ENCODE measurements at regions of chr2 and their contacts with region 1.

Region 1: DNA sequence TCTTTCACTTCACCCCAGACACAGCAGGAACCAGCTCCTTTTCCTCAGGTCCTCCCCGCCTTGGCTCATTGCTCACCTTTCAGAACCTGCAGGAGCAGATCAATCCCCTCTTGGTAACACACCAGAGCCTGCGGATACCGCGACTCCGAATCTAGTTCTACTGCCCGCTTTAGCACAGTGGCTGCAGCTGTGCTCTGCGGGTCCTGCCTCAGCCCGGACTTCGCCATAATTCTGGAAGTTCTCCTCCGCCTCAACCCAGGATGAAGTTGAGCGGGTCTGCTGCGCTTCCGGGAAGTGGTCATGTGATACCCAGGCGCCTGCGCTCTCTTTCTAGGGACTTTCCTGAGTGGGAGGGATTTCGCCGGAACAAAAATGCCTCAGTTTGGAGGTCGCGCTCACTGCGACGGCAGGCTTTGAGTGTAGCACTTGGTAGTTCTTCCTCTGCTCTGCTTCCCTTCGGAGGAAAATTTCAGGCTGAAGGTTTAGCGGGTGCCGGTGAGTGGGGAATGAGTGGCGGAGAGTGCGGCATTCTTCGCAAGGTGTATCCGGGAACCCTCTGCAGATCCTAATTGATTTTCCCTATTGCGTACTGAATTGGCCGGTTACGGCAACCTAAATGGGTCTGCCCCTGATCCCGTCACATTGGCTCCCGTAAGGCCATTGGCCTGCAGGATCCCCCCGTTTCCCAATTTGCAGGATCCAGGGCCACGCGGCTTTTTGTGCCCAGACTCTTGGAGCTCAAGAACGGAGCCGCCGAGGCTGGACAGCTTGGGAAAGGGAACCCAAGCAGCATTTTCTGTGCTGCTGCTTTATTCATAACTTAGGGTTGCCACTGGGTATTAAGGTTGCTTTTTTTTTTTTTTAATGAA is at the starts of genes MITD1 and MRPL30:
- DNase-seq: peak; percentile 91 to 93 (median 92)
- H3K4me3 ChIP-seq: peak within 1 kb of the TSS; percentile 70 to 71
- H3K4me3 Mint-ChIP-seq: peak within 1 kb of the TSS; percentile 98 to 100 (median 99)
- H3K27ac ChIP-seq: peak within 1 kb of the TSS; percentile 91
- H3K27ac Mint-ChIP-seq: peak within 1 kb of the TSS; percentile 93 to 100 (median 99)
- H3K4me1 ChIP-seq: peaks cover 57% of the 10 kb centered on the region
- H3K4me1 Mint-ChIP-seq: peaks cover 41 to 79% (median 60%) of the 10 kb centered on the region in 4 donors
- H3K27me3 ChIP-seq: no peaks in the 10 kb centered on the region
- H3K27me3 Mint-ChIP-seq: no peaks in the 10 kb centered on the region
- total RNA-seq, gene MITD1: 79.1 to 84.3 TPM
- total RNA-seq, gene MRPL30: 20.2 to 22.7 TPM

Region 2: GRCh38 chr2:99032786-99033185 is 148.2 kb before region 1 on chr2:
- CTCF ChIA-PET with region 1: no interaction called
- POLR2A ChIA-PET with region 1: no interaction called
- intact Hi-C with region 1: no loop called
- DNase-seq: no peak
- H3K4me3 ChIP-seq: no peak overlapping the region
- H3K4me3 Mint-ChIP-seq: no peak overlapping the region
- H3K27ac ChIP-seq: no peak overlapping the region
- H3K27ac Mint-ChIP-seq: no peak overlapping the region
- H3K4me1 ChIP-seq: no peaks in the 10 kb centered on the region
- H3K4me1 Mint-ChIP-seq: no peaks in the 10 kb centered on the region
- H3K27me3 ChIP-seq: no peaks in the 10 kb centered on the region
- H3K27me3 Mint-ChIP-seq: peaks cover 4% of the 10 kb centered on the region in 2 donors

Region 3: DNA sequence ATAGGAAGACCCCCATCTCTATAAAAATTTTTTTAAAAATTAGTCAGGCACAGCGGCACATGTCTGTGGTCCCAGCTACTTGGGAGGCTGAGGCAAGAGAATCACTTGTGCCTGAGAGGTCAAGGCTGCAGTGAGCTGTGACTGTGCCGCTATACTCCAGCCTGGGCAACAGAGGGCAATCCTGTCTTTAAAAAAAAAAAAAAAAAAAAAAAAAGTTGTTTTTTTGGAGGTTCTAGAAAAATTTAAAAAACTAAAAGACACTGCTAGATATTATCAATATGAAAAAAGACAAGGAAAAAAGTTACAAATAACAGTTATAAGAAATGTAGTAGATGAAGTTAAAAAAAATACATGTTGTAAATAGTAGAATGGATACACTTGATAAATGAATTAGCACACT is 95.6 kb before region 1 on chr2:
- CTCF ChIA-PET with region 1: interaction called, 3 read pairs
- POLR2A ChIA-PET with region 1: interaction called, 3 read pairs
- intact Hi-C with region 1: loop called (anchors 5 kb)
- DNase-seq: peak in 3 of 5 donors; percentile 8 to 18 (median 14)
- H3K4me3 ChIP-seq: no peak overlapping the region
- H3K4me3 Mint-ChIP-seq: no peak overlapping the region
- H3K27ac ChIP-seq: no peak overlapping the region
- H3K27ac Mint-ChIP-seq: peak overlapping the region in 1 of 7 donors; percentile 39
- H3K4me1 ChIP-seq: peaks cover 8% of the 10 kb centered on the region
- H3K4me1 Mint-ChIP-seq: peaks cover 4 to 5% (median 5%) of the 10 kb centered on the region in 4 donors
- H3K27me3 ChIP-seq: no peaks in the 10 kb centered on the region
- H3K27me3 Mint-ChIP-seq: peaks cover 14 to 18% of the 10 kb centered on the region in 2 donors

Region 4: DNA sequence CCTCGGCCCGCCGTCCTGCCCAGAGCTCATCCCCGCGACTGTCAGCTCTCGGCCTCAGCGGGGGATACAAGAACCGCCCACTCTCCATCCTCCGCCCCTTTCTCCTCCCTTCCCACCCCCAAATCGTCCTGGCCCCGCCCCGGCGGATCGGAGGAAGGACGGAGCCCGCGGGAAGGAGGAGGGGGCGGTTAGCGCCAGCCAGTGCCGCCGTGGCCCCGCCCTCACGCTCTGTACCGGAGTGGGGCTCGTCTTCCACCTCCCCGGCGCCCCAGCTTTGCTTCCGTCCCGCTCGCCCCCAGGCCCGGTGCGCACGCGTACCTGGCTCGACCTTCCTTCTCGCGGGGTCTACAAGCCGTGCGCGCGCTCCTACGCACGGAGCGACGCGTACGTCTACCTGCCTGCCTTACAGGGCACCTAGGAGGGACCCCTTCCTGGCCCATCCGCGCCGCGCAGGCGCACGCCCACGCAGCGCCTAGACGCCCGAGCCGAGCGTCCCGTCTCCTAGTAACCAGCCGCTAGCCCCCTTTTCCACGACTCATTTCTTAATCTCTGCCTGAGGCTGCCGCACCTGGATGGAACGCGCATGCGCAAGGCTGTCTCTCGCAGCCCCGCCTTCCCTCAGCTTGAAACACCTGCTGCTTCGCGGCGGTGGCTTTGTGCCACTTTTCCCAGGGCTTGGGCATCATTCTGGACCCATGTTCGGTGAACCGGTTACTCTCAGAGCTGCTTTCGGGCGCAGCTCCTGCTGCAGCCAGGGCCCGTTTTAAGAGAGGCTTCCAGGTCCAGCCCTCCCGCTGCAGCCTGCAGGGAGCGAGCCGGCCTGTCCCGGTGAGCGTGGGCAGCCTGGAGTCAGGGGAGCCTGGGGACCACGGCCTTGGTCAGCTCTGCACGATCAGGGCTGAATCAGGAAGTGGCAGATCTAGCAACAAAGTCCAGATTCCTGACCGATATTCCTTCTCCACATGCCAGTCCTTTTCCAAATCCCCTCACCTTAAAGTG is 39.6 kb before region 1 on chr2 and contains the start of gene C2orf15:
- CTCF ChIA-PET with region 1: interaction called, 8 read pairs
- POLR2A ChIA-PET with region 1: interaction called, 34 read pairs
- intact Hi-C with region 1: loop called (anchors 1 kb)
- DNase-seq: peak; percentile 97 to 98 (median 97)
- H3K4me3 ChIP-seq: peak within 1 kb of the TSS; percentile 50 to 97
- H3K4me3 Mint-ChIP-seq: peak within 1 kb of the TSS; percentile 93 to 99 (median 96)
- H3K27ac ChIP-seq: peak within 1 kb of the TSS; percentile 86
- H3K27ac Mint-ChIP-seq: peak within 1 kb of the TSS; percentile 96 to 99 (median 98)
- H3K4me1 ChIP-seq: peaks cover 18% of the 10 kb centered on the region
- H3K4me1 Mint-ChIP-seq: peaks cover 11 to 31% (median 17%) of the 10 kb centered on the region in 4 donors
- H3K27me3 ChIP-seq: no peaks in the 10 kb centered on the region
- H3K27me3 Mint-ChIP-seq: no peaks in the 10 kb centered on the region
- total RNA-seq, gene C2orf15: 2.3 to 3.2 TPM

Region 5: DNA sequence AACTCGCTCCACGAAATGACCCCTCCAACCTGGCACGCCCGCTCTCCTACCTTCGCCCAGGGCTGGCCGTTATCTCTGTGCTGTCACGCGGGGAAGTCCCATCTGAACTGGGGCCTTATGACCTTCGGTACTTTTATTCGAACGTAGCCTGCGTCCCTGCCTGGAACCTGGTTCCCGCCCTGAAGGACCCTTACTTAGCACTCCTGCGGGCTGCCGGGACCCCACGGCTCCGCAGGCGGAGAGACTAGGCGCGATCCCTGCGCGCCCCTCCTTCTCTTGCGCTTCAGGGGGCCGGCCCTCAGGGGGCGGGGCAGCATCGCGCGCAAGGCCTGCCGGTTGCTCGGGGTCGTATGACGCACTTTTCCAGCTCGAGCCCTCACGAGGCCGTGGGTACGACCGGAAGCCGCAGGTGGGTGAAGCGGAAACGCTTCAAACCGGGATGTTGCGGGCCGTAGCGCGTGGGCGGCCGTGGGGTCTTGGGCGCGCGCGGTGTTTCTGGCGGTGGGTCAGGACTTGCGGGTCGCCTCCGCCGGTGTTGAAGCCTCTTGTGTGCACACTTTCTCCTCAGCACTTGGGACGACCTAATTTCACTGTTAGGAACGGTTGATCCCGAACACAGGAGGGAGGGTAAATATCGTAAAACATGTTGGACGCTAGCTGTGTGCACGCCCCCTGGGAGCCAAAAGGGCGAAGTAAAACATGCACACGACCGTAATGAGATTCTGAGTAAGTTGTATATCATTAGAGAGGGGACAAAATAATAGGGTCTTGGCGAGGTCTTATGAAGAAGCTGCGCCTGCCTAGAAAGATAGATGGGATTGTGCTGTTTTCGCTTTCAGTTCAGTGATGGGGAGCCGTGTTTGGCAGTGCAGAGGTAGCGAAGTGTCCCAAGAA is 26.1 kb before region 1 on chr2 and contains the starts of genes LIPT1 and TSGA10:
- CTCF ChIA-PET with region 1: interaction called, 10 read pairs
- POLR2A ChIA-PET with region 1: interaction called, 40 read pairs
- intact Hi-C with region 1: loop called (anchors 1 kb)
- DNase-seq: peak; percentile 90 to 92 (median 91)
- H3K4me3 ChIP-seq: peak within 1 kb of the TSS; percentile 78 to 89
- H3K4me3 Mint-ChIP-seq: peak within 1 kb of the TSS in 3 of 8 donors; percentile 91 to 99 (median 96)
- H3K27ac ChIP-seq: peak within 1 kb of the TSS; percentile 97
- H3K27ac Mint-ChIP-seq: peak within 1 kb of the TSS in 1 of 7 donors; percentile 100
- H3K4me1 ChIP-seq: peaks cover 25% of the 10 kb centered on the region
- H3K4me1 Mint-ChIP-seq: peaks cover 10 to 43% (median 39%) of the 10 kb centered on the region in 4 donors
- H3K27me3 ChIP-seq: no peaks in the 10 kb centered on the region
- H3K27me3 Mint-ChIP-seq: no peaks in the 10 kb centered on the region
- total RNA-seq, gene LIPT1: 23.4 to 24.4 TPM
- total RNA-seq, gene TSGA10: 20.7 to 22.6 TPM

Region 6: DNA sequence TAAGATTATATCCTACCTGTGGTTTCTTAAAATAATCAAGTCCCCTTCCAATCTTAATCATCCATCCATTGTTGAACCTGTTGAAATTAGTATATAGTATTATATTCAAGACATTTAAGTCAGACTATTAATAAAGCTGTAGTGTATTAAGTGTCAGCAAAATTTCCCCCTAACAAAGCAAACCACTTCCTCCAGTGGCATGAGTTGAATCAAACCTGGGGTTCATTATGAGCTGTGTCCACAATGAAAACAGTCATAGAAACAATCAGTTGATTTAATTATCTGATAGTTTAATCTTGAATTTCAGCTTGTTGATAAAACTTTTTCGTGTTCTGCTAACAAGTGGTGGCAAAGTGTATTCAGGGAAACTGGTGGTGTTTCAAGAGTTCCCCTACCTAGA is 11.5 kb before region 1 on chr2:
- CTCF ChIA-PET with region 1: interaction called, 5 read pairs
- POLR2A ChIA-PET with region 1: interaction called, 16 read pairs
- intact Hi-C with region 1: loop called (anchors 1 kb)
- DNase-seq: no peak
- H3K4me3 ChIP-seq: no peak overlapping the region
- H3K4me3 Mint-ChIP-seq: no peak overlapping the region
- H3K27ac ChIP-seq: no peak overlapping the region
- H3K27ac Mint-ChIP-seq: peak overlapping the region in 6 of 7 donors; percentile 36 to 78 (median 52)
- H3K4me1 ChIP-seq: no peaks in the 10 kb centered on the region
- H3K4me1 Mint-ChIP-seq: peaks cover 0 to 25% (median 4%) of the 10 kb centered on the region in 4 donors
- H3K27me3 ChIP-seq: no peaks in the 10 kb centered on the region
- H3K27me3 Mint-ChIP-seq: no peaks in the 10 kb centered on the region

Region 7: DNA sequence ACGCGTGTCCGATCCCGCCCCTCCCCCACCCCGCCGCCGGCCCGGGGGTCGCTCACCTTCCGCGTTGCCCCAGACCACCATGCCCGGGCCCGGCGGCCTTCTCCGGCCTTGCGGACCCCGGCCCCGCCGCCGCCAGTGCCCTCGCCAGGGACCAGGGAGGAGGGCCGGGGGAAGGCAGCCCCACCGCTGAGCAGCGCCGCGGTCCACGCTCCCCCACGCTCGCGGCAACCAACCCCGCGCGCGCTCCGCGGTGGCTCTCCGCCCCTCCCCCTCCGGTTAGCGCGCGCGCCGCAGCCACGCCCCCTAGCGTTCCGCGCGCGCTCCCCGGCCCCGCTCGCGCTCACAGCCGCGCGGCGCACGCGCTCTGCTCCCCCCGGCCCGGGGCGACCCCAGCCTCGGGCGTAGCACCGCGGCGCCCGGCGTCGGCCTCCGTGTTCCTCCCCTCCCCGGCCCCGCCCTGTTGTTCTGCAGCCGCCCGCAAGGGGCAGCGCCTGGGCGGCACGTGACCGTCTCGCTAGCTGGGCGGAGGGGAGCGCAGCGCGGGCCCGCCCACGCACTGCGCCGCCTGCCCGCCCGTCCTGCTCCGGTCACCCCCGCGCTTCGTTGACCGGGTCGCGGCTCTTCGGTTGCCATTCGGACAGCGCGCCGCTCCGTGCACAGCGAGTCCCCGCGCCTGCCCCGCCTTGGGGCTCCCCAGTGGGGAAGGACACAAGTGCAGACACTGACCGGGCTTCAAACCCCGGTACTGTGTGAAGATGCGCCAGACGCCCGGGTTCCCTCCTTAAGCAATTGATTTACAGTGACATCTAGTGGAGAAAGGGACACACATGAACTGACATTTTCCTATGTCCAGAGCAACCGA is 309.0 kb after region 1 on chr2 and contains the start of gene REV1:
- CTCF ChIA-PET with region 1: interaction called, 3 read pairs
- POLR2A ChIA-PET with region 1: interaction called, 4 read pairs
- intact Hi-C with region 1: loop called (anchors 1 kb)
- DNase-seq: peak; percentile 95 to 98 (median 96)
- H3K4me3 ChIP-seq: peak within 1 kb of the TSS; percentile 76 to 89
- H3K4me3 Mint-ChIP-seq: peak within 1 kb of the TSS; percentile 94 to 100 (median 98)
- H3K27ac ChIP-seq: peak within 1 kb of the TSS; percentile 69
- H3K27ac Mint-ChIP-seq: peak within 1 kb of the TSS; percentile 95 to 99 (median 98)
- H3K4me1 ChIP-seq: peaks cover 35% of the 10 kb centered on the region
- H3K4me1 Mint-ChIP-seq: peaks cover 24 to 43% (median 32%) of the 10 kb centered on the region in 4 donors
- H3K27me3 ChIP-seq: no peaks in the 10 kb centered on the region
- H3K27me3 Mint-ChIP-seq: peaks cover 3 to 5% of the 10 kb centered on the region in 2 donors
- total RNA-seq, gene REV1: 60.1 to 62.0 TPM

Measured in CD4-positive, alpha-beta memory T cell (primary cell).